B cell (primary cell): ENCODE measurements at regions of chr2 and their contacts with region 1.

Region 1: GRCh38 chr2:217785544-217786045 is 217.2 kb downstream of the TNS1 start:
- DNase-seq: peak; percentile 80
- ATAC-seq: peak; percentile 62
- H3K4me3 ChIP-seq: no peak overlapping the region
- H3K4me3 Mint-ChIP-seq: no peak overlapping the region
- H3K27ac ChIP-seq: no peak overlapping the region
- H3K27ac Mint-ChIP-seq: no peak overlapping the region
- H3K4me1 ChIP-seq: peaks cover 6 to 17% of the 10 kb centered on the region in 2 donors
- H3K4me1 Mint-ChIP-seq: peaks cover 16% of the 10 kb centered on the region
- H3K27me3 ChIP-seq: no peaks in the 10 kb centered on the region
- H3K27me3 Mint-ChIP-seq: no peaks in the 10 kb centered on the region
- CTCF ChIP-seq: peak; percentile 96

Region 2: GRCh38 chr2:217798743-217799562 is 13.4 kb after region 1 on chr2:
- CTCF ChIA-PET with region 1: interaction called, 32 read pairs
- POLR2A ChIA-PET with region 1: no interaction called
- intact Hi-C with region 1: no loop called
- DNase-seq: peak; percentile 71
- ATAC-seq: peak; percentile 81
- H3K4me3 ChIP-seq: no peak overlapping the region
- H3K4me3 Mint-ChIP-seq: no peak overlapping the region
- H3K27ac ChIP-seq: peak overlapping the region in 1 of 2 donors; percentile 30
- H3K27ac Mint-ChIP-seq: peak overlapping the region; percentile 27
- H3K4me1 ChIP-seq: peaks cover 13 to 24% of the 10 kb centered on the region in 2 donors
- H3K4me1 Mint-ChIP-seq: peaks cover 18% of the 10 kb centered on the region
- H3K27me3 ChIP-seq: no peaks in the 10 kb centered on the region
- H3K27me3 Mint-ChIP-seq: no peaks in the 10 kb centered on the region
- CTCF ChIP-seq: no peak

Region 3: GRCh38 chr2:217810260-217810659 is 24.7 kb after region 1 on chr2:
- CTCF ChIA-PET with region 1: interaction called, 32 read pairs
- POLR2A ChIA-PET with region 1: no interaction called
- intact Hi-C with region 1: no loop called
- DNase-seq: no peak
- ATAC-seq: no peak
- H3K4me3 ChIP-seq: no peak overlapping the region
- H3K4me3 Mint-ChIP-seq: no peak overlapping the region
- H3K27ac ChIP-seq: no peak overlapping the region
- H3K27ac Mint-ChIP-seq: no peak overlapping the region
- H3K4me1 ChIP-seq: no peaks in the 10 kb centered on the region
- H3K4me1 Mint-ChIP-seq: no peaks in the 10 kb centered on the region
- H3K27me3 ChIP-seq: peaks cover 0 to 2% (median 1%) of the 10 kb centered on the region in 4 experiments
- H3K27me3 Mint-ChIP-seq: peaks cover 13% of the 10 kb centered on the region
- CTCF ChIP-seq: no peak

Region 4: DNA sequence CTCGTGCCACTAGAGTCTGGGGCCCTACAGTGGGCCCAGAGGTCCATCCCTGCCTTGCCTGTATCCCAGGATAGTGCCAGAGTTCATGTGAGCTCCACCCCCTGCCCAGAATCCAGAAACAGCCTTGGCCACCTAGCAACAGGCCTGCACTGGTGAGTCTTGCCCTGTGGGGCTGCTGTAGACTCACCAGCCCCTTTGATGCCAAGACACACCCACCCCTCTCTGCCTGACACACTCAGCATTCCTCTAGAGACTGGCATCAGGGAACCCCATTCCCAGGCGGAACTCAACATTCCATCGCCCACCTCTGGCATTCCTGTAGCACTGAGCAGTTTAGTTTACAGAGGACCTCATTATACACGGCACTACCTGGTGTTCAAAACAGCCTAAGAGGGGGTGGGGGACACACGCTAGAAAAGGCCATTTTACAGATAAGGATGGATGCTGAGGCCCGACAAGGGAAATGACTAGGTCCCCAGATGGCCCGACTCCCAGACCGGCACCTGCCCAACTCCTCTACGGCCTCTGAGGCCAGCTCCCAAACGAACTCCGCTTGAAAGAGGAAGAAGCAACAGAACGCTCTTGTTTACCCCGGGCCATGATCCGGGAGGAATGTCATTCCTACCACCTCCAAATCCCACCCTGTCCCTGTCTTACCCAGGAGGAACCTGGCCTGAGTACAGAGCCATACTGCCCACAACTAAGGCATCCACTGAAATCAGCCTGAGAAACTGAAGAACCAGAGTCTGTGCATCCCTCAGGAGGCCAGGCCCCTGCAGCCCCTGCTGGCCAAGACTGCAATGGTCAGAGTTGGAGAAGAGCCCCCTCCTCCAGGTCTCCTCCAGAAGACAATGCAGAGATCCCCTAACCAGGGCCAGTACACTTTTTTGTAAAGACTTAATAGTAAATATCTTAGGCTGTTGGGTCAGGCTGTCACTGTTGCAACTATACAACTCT is 37.0 kb after region 1 on chr2:
- CTCF ChIA-PET with region 1: no interaction called
- POLR2A ChIA-PET with region 1: no interaction called
- intact Hi-C with region 1: no loop called
- DNase-seq: no peak
- ATAC-seq: no peak
- H3K4me3 ChIP-seq: no peak overlapping the region
- H3K4me3 Mint-ChIP-seq: no peak overlapping the region
- H3K27ac ChIP-seq: no peak overlapping the region
- H3K27ac Mint-ChIP-seq: no peak overlapping the region
- H3K4me1 ChIP-seq: no peaks in the 10 kb centered on the region
- H3K4me1 Mint-ChIP-seq: no peaks in the 10 kb centered on the region
- H3K27me3 ChIP-seq: no peaks in the 10 kb centered on the region
- H3K27me3 Mint-ChIP-seq: no peaks in the 10 kb centered on the region
- CTCF ChIP-seq: no peak

Region 5: GRCh38 chr2:217886720-217887309 is 101.2 kb after region 1 on chr2:
- CTCF ChIA-PET with region 1: interaction called, 412 read pairs
- POLR2A ChIA-PET with region 1: no interaction called
- intact Hi-C with region 1: loop called (anchors 1 kb)
- DNase-seq: peak; percentile 79
- ATAC-seq: peak; percentile 76
- H3K4me3 ChIP-seq: no peak overlapping the region
- H3K4me3 Mint-ChIP-seq: peak overlapping the region; percentile 4
- H3K27ac ChIP-seq: no peak overlapping the region
- H3K27ac Mint-ChIP-seq: no peak overlapping the region
- H3K4me1 ChIP-seq: peaks cover 12 to 15% of the 10 kb centered on the region in 2 donors
- H3K4me1 Mint-ChIP-seq: peaks cover 27% of the 10 kb centered on the region
- H3K27me3 ChIP-seq: no peaks in the 10 kb centered on the region
- H3K27me3 Mint-ChIP-seq: no peaks in the 10 kb centered on the region
- CTCF ChIP-seq: peak; percentile 76

Region 6: DNA sequence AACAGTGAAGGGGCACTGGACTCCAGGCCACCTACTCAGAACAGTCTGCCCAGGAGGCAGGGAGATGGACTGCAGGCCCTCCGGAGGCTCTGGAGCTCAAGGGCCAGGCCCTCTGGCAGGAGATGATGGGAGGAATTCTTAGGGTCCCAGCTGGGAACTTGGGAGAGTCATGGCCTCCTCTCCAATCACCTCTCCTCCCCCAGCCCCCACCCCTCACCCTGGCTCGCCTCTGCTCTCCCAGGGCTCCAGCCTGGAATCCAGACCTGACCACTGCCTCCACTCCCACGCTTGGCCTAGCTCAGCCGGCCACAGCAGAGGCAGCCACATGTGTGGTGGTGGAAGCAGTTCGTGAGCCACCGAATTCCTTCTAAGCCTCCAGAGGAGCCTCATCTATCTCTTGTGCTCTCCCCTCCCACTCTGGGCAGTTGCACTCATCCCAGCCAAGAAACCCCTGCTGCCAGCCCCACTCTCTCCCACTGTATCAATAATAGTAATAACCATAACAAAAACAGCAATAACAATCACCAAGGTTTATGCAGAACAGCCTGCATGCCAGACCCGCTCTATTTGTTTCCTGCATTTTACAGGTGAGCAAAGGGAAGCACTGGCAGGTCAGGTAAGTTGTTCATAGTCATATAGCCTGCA is 149.8 kb after region 1 on chr2:
- CTCF ChIA-PET with region 1: no interaction called
- POLR2A ChIA-PET with region 1: no interaction called
- intact Hi-C with region 1: no loop called
- DNase-seq: no peak
- ATAC-seq: no peak
- H3K4me3 ChIP-seq: no peak overlapping the region
- H3K4me3 Mint-ChIP-seq: no peak overlapping the region
- H3K27ac ChIP-seq: no peak overlapping the region
- H3K27ac Mint-ChIP-seq: no peak overlapping the region
- H3K4me1 ChIP-seq: peaks cover 0 to 5% of the 10 kb centered on the region in 2 donors
- H3K4me1 Mint-ChIP-seq: peaks cover 4% of the 10 kb centered on the region
- H3K27me3 ChIP-seq: peaks cover 0 to 3% (median 0%) of the 10 kb centered on the region in 4 experiments
- H3K27me3 Mint-ChIP-seq: peaks cover 21% of the 10 kb centered on the region
- CTCF ChIP-seq: no peak

Region 7: GRCh38 chr2:217993817-217994463 is 208.3 kb after region 1 on chr2:
- CTCF ChIA-PET with region 1: interaction called, 76 read pairs
- POLR2A ChIA-PET with region 1: no interaction called
- intact Hi-C with region 1: loop called (anchors 1 kb)
- DNase-seq: peak; percentile 58
- ATAC-seq: peak; percentile 54
- H3K4me3 ChIP-seq: no peak overlapping the region
- H3K4me3 Mint-ChIP-seq: no peak overlapping the region
- H3K27ac ChIP-seq: no peak overlapping the region
- H3K27ac Mint-ChIP-seq: no peak overlapping the region
- H3K4me1 ChIP-seq: no peaks in the 10 kb centered on the region
- H3K4me1 Mint-ChIP-seq: no peaks in the 10 kb centered on the region
- H3K27me3 ChIP-seq: peaks cover 0 to 3% (median 0%) of the 10 kb centered on the region in 4 experiments
- H3K27me3 Mint-ChIP-seq: peaks cover 29% of the 10 kb centered on the region
- CTCF ChIP-seq: peak; percentile 75

Region 8: DNA sequence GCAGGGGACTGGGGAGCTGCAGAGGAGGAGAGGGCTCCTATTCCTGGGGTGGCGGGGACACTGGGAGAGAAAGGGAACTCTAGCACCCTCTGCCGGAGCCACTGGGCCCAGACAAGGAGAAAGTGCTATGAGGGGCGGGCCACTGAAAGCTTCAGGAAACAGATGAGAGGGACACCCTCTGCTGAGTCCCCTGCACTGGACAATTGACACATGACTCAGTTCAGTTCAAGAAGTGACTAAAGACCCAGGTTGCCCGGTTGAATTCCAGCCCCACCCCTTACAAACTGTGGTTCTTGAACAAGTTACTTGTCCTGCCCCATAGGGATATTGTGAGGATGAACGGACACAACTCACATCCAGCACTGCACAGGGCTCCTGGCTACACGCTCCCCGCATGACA is 288.4 kb after region 1 on chr2:
- CTCF ChIA-PET with region 1: interaction called, 13 read pairs
- POLR2A ChIA-PET with region 1: no interaction called
- intact Hi-C with region 1: no loop called
- DNase-seq: no peak
- ATAC-seq: no peak
- H3K4me3 ChIP-seq: no peak overlapping the region
- H3K4me3 Mint-ChIP-seq: no peak overlapping the region
- H3K27ac ChIP-seq: no peak overlapping the region
- H3K27ac Mint-ChIP-seq: no peak overlapping the region
- H3K4me1 ChIP-seq: no peaks in the 10 kb centered on the region
- H3K4me1 Mint-ChIP-seq: no peaks in the 10 kb centered on the region
- H3K27me3 ChIP-seq: peaks cover 0 to 3% (median 0%) of the 10 kb centered on the region in 4 experiments
- H3K27me3 Mint-ChIP-seq: peaks cover 19% of the 10 kb centered on the region
- CTCF ChIP-seq: peak; percentile 18

Region 9: GRCh38 chr2:218089259-218089658 is 303.7 kb after region 1 on chr2:
- CTCF ChIA-PET with region 1: no interaction called
- POLR2A ChIA-PET with region 1: no interaction called
- intact Hi-C with region 1: no loop called
- DNase-seq: no peak
- ATAC-seq: no peak
- H3K4me3 ChIP-seq: no peak overlapping the region
- H3K4me3 Mint-ChIP-seq: no peak overlapping the region
- H3K27ac ChIP-seq: no peak overlapping the region
- H3K27ac Mint-ChIP-seq: no peak overlapping the region
- H3K4me1 ChIP-seq: no peaks in the 10 kb centered on the region
- H3K4me1 Mint-ChIP-seq: no peaks in the 10 kb centered on the region
- H3K27me3 ChIP-seq: peaks cover 0 to 10% (median 0%) of the 10 kb centered on the region in 4 experiments
- H3K27me3 Mint-ChIP-seq: peaks cover 26% of the 10 kb centered on the region
- CTCF ChIP-seq: no peak

Region 10: DNA sequence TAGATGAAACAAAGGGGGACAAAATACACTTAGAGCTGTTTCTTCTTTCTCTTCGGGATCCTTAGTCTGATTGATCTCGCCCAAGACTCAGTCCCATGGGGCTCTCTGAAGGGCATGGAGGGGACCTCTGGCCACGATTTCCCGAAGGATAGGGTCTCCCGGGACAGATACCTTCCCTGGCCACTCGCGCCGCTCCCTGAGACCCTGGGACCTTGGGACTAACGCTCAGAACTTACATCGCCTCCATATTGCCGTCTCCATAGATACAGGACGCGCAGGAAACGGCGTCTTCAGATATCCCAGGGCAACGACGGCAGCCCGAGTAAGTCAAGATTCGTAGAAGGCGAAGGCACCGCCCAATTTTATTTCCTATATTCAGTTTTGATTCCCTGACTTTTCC is 1255.7 kb after region 1 on chr2 and contains the start of gene CFAP65:
- CTCF ChIA-PET with region 1: no interaction called
- POLR2A ChIA-PET with region 1: no interaction called
- intact Hi-C with region 1: no loop called
- DNase-seq: no peak
- ATAC-seq: no peak
- H3K4me3 ChIP-seq: peak within 1 kb of the TSS in 1 of 5 experiments; percentile 13
- H3K4me3 Mint-ChIP-seq: peak within 1 kb of the TSS; percentile 32
- H3K27ac ChIP-seq: no peak within 1 kb of the TSS
- H3K27ac Mint-ChIP-seq: no peak within 1 kb of the TSS
- H3K4me1 ChIP-seq: no peaks in the 10 kb centered on the region
- H3K4me1 Mint-ChIP-seq: peaks cover 6% of the 10 kb centered on the region
- H3K27me3 ChIP-seq: peaks cover 0 to 53% (median 27%) of the 10 kb centered on the region in 4 experiments
- H3K27me3 Mint-ChIP-seq: peaks cover 61% of the 10 kb centered on the region
- CTCF ChIP-seq: no peak
- total RNA-seq, gene CFAP65: not detected in 2 replicates